Heart left ventricle (tissue), 16 donors: ENCODE measurements at regions of chr7 and their contacts with region 1.

Region 1: DNA sequence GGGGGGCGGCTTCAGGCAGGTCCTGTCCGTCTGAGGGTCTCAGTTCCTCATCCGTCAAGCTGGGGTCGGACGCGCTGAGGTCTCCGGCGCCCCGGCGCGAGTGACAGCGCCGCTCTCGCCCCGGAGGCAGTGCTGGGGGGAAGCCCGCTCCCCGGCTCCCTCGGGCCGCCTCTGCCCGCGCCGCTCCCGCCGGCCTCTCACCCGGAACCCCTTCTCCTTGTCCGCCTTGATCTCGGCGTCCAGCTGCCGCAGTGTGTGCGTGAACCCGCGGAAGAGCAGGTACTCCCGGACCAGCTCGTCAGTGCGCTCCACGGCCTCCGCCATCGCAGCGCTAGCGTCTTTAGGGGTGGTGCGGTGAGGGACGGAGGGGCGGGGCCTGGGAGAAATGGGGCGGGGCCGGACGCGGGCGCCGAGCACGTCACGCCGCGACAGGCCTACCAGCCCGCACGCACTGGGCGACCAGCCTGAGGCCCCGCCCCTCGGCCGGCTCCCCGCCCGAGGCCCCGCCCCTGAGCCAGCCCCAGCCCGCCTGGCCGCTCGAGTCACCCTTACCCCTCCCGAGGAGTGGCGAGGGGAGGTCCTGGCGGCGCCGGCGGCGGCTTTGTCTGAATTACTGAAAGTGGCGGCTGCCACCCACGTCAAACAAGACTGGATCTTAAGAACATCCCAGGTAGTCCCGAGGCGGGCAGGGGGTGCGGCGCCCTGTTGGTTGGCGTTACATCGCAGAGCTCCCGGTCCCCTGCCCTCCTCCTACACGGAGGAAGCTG is at the start of gene WDR91:
- DNase-seq: peak; percentile 95 to 98 (median 96)
- ATAC-seq: peak; percentile 95 to 99 (median 98)
- H3K4me3 ChIP-seq: peak within 1 kb of the TSS; percentile 49 to 99 (median 84)
- H3K27ac ChIP-seq: peak within 1 kb of the TSS; percentile 70 to 93 (median 84)
- H3K4me1 ChIP-seq: peaks cover 0 to 38% (median 8%) of the 10 kb centered on the region in 12 donors
- H3K27me3 ChIP-seq: no peaks in the 10 kb centered on the region
- CTCF ChIP-seq: peak in 2 of 12 donors; percentile 13 to 21
- POLR2A ChIP-seq: peak; percentile 39 to 82
- total RNA-seq, gene WDR91: 3.4 to 11.4 (median 5.8) TPM

Region 2: GRCh38 chr7:134986363-134987251 is 224.8 kb before region 1 on chr7 and contains the start of gene AGBL3:
- intact Hi-C with region 1: loop called in 1 of 10 experiments (anchors 5 kb)
- DNase-seq: peak; percentile 97 to 99 (median 98)
- ATAC-seq: peak; percentile 98 to 99 (median 99)
- H3K4me3 ChIP-seq: peak within 1 kb of the TSS; percentile 59 to 90 (median 77)
- H3K27ac ChIP-seq: peak within 1 kb of the TSS; percentile 65 to 93 (median 88)
- H3K4me1 ChIP-seq: peaks cover 0 to 32% (median 13%) of the 10 kb centered on the region in 12 donors
- H3K27me3 ChIP-seq: no peaks in the 10 kb centered on the region
- CTCF ChIP-seq: peak; percentile 41 to 90 (median 69)
- POLR2A ChIP-seq: peak in 1 of 2 donors; percentile 62
- total RNA-seq, gene AGBL3: 0.40 to 1.5 (median 0.93) TPM